Caco-2 (cell line): ENCODE measurements at regions of chr4 and their contacts with region 1.

Region 1: GRCh38 chr4:158729716-158730559 is 6.7 kb upstream of the PPID start:
- DNase-seq: peak; percentile 63 to 66
- H3K4me3 ChIP-seq: no peak overlapping the region
- H3K4me3 Mint-ChIP-seq: no peak overlapping the region
- H3K27ac Mint-ChIP-seq: no peak overlapping the region
- H3K4me1 ChIP-seq: no peaks in the 10 kb centered on the region
- H3K4me1 Mint-ChIP-seq: peaks cover 6% of the 10 kb centered on the region
- H3K27me3 ChIP-seq: no peaks in the 10 kb centered on the region
- H3K27me3 Mint-ChIP-seq: peaks cover 6% of the 10 kb centered on the region
- CTCF ChIP-seq: peak; percentile 65 to 78

Region 2: GRCh38 chr4:158599150-158599549 is 130.8 kb before region 1 on chr4:
- CTCF ChIA-PET with region 1: no interaction called
- POLR2A ChIA-PET with region 1: no interaction called
- intact Hi-C with region 1: no loop called
- DNase-seq: no peak
- H3K4me3 ChIP-seq: no peak overlapping the region
- H3K4me3 Mint-ChIP-seq: no peak overlapping the region
- H3K27ac Mint-ChIP-seq: no peak overlapping the region
- H3K4me1 ChIP-seq: no peaks in the 10 kb centered on the region
- H3K4me1 Mint-ChIP-seq: no peaks in the 10 kb centered on the region
- H3K27me3 ChIP-seq: no peaks in the 10 kb centered on the region
- H3K27me3 Mint-ChIP-seq: peaks cover 6% of the 10 kb centered on the region
- CTCF ChIP-seq: no peak

Region 3: GRCh38 chr4:158850800-158851644 is 121.1 kb after region 1 on chr4:
- CTCF ChIA-PET with region 1: interaction called, 4 read pairs
- POLR2A ChIA-PET with region 1: no interaction called
- intact Hi-C with region 1: loop called (anchors 1 kb)
- DNase-seq: peak in 1 of 2 experiments; percentile 30
- H3K4me3 ChIP-seq: no peak overlapping the region
- H3K4me3 Mint-ChIP-seq: no peak overlapping the region
- H3K27ac Mint-ChIP-seq: no peak overlapping the region
- H3K4me1 ChIP-seq: no peaks in the 10 kb centered on the region
- H3K4me1 Mint-ChIP-seq: no peaks in the 10 kb centered on the region
- H3K27me3 ChIP-seq: no peaks in the 10 kb centered on the region
- H3K27me3 Mint-ChIP-seq: no peaks in the 10 kb centered on the region
- CTCF ChIP-seq: peak; percentile 52 to 55

Region 4: GRCh38 chr4:159016593-159017024 is 286.7 kb after region 1 on chr4:
- CTCF ChIA-PET with region 1: no interaction called
- POLR2A ChIA-PET with region 1: no interaction called
- intact Hi-C with region 1: loop called (anchors 5 kb)
- DNase-seq: peak in 1 of 2 experiments; percentile 30
- H3K4me3 ChIP-seq: no peak overlapping the region
- H3K4me3 Mint-ChIP-seq: no peak overlapping the region
- H3K27ac Mint-ChIP-seq: no peak overlapping the region
- H3K4me1 ChIP-seq: no peaks in the 10 kb centered on the region; the same call in 1 of the 2 replicates
- H3K4me1 Mint-ChIP-seq: no peaks in the 10 kb centered on the region
- H3K27me3 ChIP-seq: no peaks in the 10 kb centered on the region
- H3K27me3 Mint-ChIP-seq: no peaks in the 10 kb centered on the region
- CTCF ChIP-seq: peak in 1 of 2 experiments; percentile 24

Region 5: DNA sequence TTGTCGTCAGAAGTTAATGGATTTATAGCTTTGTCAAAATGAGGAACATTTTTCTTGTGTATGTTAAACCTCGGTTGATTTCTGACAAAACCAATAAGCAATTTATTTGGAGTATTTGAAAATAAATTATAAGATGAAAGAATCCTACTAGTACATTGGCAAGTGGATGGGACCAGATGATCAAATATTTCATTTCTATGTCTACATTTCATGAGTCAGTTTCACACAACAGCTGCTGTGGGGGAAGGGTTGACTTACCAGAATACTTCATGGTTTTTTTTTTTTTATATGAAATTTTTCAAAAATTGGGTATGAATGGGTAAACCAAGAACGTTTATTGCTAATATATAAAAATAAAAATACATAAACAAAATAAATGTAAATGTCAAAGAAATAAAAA is 412.3 kb after region 1 on chr4:
- CTCF ChIA-PET with region 1: no interaction called
- POLR2A ChIA-PET with region 1: no interaction called
- intact Hi-C with region 1: no loop called
- DNase-seq: no peak
- H3K4me3 ChIP-seq: no peak overlapping the region
- H3K4me3 Mint-ChIP-seq: no peak overlapping the region
- H3K27ac Mint-ChIP-seq: no peak overlapping the region
- H3K4me1 ChIP-seq: peaks cover 26% of the 10 kb centered on the region
- H3K4me1 Mint-ChIP-seq: peaks cover 36% of the 10 kb centered on the region
- H3K27me3 ChIP-seq: no peaks in the 10 kb centered on the region
- H3K27me3 Mint-ChIP-seq: no peaks in the 10 kb centered on the region
- CTCF ChIP-seq: no peak

Region 6: DNA sequence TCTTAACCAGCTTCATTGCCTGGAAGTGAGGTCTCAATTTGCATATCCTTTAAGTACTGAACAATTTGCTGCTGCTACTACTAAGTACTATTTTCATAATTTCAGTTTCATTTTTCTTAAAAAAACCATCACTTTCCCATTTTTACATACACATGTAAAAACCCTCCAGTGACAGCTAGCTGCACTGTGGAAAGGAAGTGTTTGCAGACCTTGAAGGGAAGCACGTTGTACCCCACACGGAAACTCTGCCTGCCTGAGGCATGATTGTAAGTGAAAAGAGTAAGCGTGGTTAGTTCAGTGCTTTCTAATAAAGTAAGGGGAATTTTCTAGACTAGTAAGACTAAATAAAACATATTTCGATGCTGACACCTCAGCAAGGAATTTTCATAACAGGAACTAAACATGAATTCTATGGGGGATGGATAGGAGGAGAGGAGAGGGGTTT is 476.5 kb after region 1 on chr4:
- CTCF ChIA-PET with region 1: no interaction called
- POLR2A ChIA-PET with region 1: no interaction called
- intact Hi-C with region 1: loop called (anchors 1 kb)
- DNase-seq: no peak
- H3K4me3 ChIP-seq: no peak overlapping the region
- H3K4me3 Mint-ChIP-seq: no peak overlapping the region
- H3K27ac Mint-ChIP-seq: no peak overlapping the region
- H3K4me1 ChIP-seq: no peaks in the 10 kb centered on the region; the same call in 1 of the 2 replicates
- H3K4me1 Mint-ChIP-seq: peaks cover 28% of the 10 kb centered on the region
- H3K27me3 ChIP-seq: no peaks in the 10 kb centered on the region
- H3K27me3 Mint-ChIP-seq: no peaks in the 10 kb centered on the region
- CTCF ChIP-seq: no peak